AG04449 (cell line): ENCODE measurements at regions of chr22 and their contacts with region 1.

Region 1: DNA sequence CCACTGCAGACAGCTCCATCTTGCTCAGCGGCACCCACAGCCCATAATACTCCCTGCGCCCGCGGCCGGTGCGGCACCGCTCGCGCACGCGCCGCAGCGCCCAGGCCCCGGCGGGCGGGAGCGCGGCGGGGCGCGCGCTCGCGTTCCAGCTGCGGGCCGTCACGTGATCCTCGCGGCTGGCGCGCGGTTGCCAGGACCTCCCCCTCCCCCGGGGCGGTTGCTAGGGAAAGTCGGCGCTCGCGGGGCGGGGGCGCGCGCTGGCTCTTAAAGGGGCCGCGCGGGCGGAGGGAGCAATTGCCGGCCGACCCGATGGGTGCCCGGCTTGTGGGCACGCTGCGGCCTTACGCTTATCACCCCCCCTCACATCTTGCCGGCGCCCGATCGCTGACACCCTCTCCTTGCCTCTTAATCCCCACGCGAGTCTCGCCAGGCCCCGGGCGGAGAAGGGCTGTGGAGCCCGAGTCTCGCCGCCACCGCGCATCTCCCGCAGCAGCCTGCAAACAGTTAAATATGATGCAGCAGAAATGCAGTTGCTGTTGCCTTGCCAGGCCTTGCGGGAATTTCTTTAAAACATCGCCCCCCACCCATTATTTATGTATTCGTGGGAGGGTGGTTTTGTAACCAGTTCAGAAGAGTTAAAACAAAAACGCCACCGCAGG is at the start of gene CBX6:
- DNase-seq: no peak
- H3K4me3 ChIP-seq: peak within 1 kb of the TSS; percentile 75
- CTCF ChIP-seq: no peak

Region 2: DNA sequence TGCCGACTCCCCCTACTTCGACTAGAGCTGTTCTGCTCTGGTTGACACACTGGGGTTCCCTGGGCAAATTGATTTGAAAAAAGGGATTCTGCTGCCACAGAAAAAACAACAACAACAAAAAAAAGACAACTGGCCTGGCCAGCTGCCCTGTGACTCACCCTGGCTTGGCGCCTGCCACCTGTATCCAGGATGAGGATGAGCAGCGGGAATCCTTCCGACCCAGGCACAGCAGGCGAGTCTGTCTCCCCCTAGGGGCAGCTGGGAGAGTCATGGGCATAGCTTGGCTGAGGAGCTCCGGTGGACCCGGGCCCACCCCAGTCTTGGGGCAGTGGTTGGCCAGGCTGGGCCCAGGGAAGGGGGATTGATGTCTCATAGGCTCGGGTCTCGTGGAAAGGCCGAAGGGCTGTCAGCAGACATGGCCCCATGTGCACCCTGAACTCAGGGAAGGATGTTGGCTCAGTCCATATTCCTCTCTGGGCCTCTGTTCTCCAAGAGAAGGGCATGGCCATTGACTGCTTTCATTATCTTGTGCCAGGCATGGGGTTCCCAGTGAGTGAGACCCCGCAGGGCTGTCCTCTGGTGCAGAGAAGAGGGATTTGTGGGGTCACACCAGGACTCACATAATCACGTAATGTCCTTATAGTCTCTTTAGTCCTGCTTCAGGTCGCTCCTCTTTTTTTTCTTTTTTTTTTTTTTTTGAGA is 106.1 kb before region 1 on chr22:
- CTCF ChIA-PET with region 1: interaction called, 172 read pairs
- POLR2A ChIA-PET with region 1: interaction called, 3 read pairs
- DNase-seq: no peak
- H3K4me3 ChIP-seq: no peak overlapping the region
- CTCF ChIP-seq: peak; percentile 92

Region 3: GRCh38 chr22:38890377-38890776 is 18.1 kb after region 1 on chr22:
- CTCF ChIA-PET with region 1: interaction called, 10 read pairs
- POLR2A ChIA-PET with region 1: no interaction called
- DNase-seq: no peak
- H3K4me3 ChIP-seq: no peak overlapping the region
- CTCF ChIP-seq: no peak

Region 4: GRCh38 chr22:38957046-38957759 is 84.9 kb after region 1 on chr22 and contains the start of gene APOBEC3A:
- CTCF ChIA-PET with region 1: no interaction called
- POLR2A ChIA-PET with region 1: no interaction called
- DNase-seq: no peak
- H3K4me3 ChIP-seq: no peak within 1 kb of the TSS
- CTCF ChIP-seq: no peak

Region 5: GRCh38 chr22:38996105-38996504 is 123.8 kb after region 1 on chr22:
- CTCF ChIA-PET with region 1: interaction called, 238 read pairs
- POLR2A ChIA-PET with region 1: no interaction called
- DNase-seq: no peak
- H3K4me3 ChIP-seq: no peak overlapping the region
- CTCF ChIP-seq: no peak

Region 6: GRCh38 chr22:39068033-39068791 is 195.9 kb after region 1 on chr22:
- CTCF ChIA-PET with region 1: no interaction called
- POLR2A ChIA-PET with region 1: no interaction called
- DNase-seq: no peak
- H3K4me3 ChIP-seq: no peak overlapping the region
- CTCF ChIP-seq: no peak

Region 7: GRCh38 chr22:39117585-39118191 is 245.4 kb after region 1 on chr22:
- CTCF ChIA-PET with region 1: interaction called, 32 read pairs
- POLR2A ChIA-PET with region 1: no interaction called
- DNase-seq: no peak
- H3K4me3 ChIP-seq: no peak overlapping the region
- CTCF ChIP-seq: peak; percentile 38